ENCODE measurements at regions of chr11 and their contacts with region 1.

Region 1: DNA sequence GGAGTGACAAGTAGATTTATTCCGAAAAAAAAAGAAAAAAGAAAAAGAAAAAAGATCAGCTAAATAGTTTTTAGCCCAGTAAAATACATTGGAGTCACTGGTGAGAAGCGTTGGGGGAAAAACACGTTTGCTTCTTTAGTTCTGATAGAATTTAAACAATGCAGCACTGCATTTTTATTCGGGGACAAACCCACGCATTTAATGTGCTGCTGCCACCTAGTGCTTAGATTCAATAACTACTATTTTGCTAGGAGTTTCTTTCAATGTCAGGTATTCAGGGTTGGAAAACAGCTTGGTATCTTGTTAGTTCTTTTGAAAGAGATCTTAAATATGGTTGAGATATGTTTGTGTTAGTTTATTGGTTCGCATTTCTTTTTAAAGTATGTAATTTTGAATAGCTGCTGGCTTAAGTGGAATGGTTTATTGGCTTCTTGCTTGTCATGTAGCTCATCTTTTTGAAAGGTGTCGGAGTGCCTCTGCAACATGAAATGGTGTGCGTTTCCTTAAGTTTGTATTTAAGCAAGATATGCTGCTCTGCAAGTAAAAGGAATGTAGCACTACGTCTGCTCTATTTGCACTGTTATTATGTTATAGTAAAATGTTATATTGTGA is 41.9 kb downstream of the SVIP start:
- DNase-seq: peak; percentile 51
- ATAC-seq: peak; percentile 53
- H3K4me3 Mint-ChIP-seq: no peak overlapping the region
- H3K27ac Mint-ChIP-seq: no peak overlapping the region
- H3K4me1 Mint-ChIP-seq: no peaks in the 10 kb centered on the region
- H3K27me3 Mint-ChIP-seq: no peaks in the 10 kb centered on the region

Region 2: GRCh38 chr11:21944577-21944976 is 843.1 kb before region 1 on chr11:
- CTCF ChIA-PET with region 1: no interaction called
- POLR2A ChIA-PET with region 1: no interaction called
- intact Hi-C with region 1: no loop called
- DNase-seq: no peak
- ATAC-seq: no peak
- H3K4me3 Mint-ChIP-seq: no peak overlapping the region
- H3K27ac Mint-ChIP-seq: no peak overlapping the region
- H3K4me1 Mint-ChIP-seq: no peaks in the 10 kb centered on the region
- H3K27me3 Mint-ChIP-seq: no peaks in the 10 kb centered on the region

Region 3: DNA sequence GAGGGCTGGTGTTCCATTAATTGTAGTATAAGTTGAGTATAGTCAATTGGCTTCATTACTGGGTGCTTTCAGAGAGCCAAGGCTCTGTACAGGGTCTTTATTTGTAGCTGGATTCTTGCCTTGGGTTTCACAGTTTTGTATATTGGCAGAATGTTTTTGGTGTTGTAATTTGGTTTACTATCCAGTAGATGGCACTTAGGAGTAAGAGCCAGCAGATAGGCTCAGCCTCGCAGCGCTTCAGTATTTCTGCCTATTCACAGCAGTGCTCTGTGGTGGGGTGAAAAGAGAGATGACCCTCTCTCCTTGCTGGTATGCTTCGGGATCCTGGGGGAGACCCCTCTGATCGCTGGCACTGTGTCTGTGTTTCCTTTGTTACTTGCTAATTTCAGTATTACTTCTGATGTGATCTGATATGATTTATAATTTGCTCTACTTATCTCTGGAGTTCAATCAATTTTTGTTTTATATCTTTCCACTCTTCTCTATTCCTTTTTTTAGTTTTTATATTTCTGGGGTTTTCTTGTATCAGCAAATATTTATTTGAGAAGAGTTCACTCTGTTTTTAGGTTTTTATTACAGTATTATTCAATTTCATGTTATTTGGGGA is 542.6 kb before region 1 on chr11:
- CTCF ChIA-PET with region 1: interaction called, 6 read pairs
- POLR2A ChIA-PET with region 1: no interaction called
- intact Hi-C with region 1: loop called (anchors 2 kb)
- DNase-seq: peak; percentile 37
- ATAC-seq: peak; percentile 60
- H3K4me3 Mint-ChIP-seq: no peak overlapping the region
- H3K27ac Mint-ChIP-seq: no peak overlapping the region
- H3K4me1 Mint-ChIP-seq: no peaks in the 10 kb centered on the region
- H3K27me3 Mint-ChIP-seq: peaks cover 14% of the 10 kb centered on the region

Region 4: GRCh38 chr11:22276535-22276934 is 511.1 kb before region 1 on chr11:
- CTCF ChIA-PET with region 1: no interaction called
- POLR2A ChIA-PET with region 1: no interaction called
- intact Hi-C with region 1: no loop called
- DNase-seq: no peak
- ATAC-seq: no peak
- H3K4me3 Mint-ChIP-seq: no peak overlapping the region
- H3K27ac Mint-ChIP-seq: no peak overlapping the region
- H3K4me1 Mint-ChIP-seq: no peaks in the 10 kb centered on the region
- H3K27me3 Mint-ChIP-seq: no peaks in the 10 kb centered on the region

Region 5: DNA sequence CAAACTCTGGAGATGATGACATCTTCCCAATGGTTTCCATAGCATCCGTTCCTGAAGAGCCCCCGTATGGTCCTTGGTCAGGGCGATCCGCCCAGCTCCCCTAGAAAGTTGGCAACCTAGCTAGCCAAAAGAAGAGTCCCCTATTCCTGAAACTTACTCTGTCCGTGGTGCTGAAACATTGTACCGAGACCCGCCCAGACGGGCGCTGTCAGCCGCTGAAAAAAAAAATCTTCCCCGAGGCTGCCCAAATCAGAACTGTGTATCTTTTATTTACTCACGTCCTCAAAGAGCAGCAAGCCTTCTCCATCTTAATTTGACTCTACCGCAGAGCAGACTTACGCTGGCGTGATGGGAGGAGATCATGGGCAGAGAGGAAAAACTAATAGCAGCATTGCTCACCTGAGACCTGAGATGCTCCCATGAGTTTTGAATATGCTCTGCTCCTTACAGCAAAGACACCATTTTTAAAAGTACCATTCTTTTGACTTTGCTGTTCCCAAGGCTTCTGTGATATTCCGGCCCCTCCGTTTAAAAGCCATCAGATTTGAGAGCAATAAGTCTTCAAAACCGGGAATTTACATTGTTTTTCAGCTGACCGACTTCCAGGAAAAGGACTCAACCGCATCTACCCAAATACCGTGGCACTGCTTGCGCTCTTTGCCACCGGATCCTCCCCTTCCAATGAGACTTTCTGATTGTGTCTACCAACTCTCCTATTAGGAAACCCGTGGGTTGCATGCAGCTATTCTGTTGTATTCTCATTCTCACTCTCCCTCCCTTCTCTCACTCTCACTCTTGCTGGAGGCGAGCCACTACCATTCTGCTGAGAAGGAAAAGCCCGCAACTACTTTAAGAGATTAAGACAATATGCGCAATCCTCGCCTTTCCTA is 449.8 kb before region 1 on chr11 and contains the start of gene SLC17A6:
- CTCF ChIA-PET with region 1: interaction called, 7 read pairs
- POLR2A ChIA-PET with region 1: no interaction called
- intact Hi-C with region 1: loop called (anchors 1 kb)
- DNase-seq: peak; percentile 40
- ATAC-seq: peak; percentile 42
- H3K4me3 Mint-ChIP-seq: no peak within 1 kb of the TSS
- H3K27ac Mint-ChIP-seq: no peak within 1 kb of the TSS
- H3K4me1 Mint-ChIP-seq: peaks cover 14% of the 10 kb centered on the region
- H3K27me3 Mint-ChIP-seq: peaks cover 59% of the 10 kb centered on the region
- total RNA-seq, gene SLC17A6: not detected

Region 6: GRCh38 chr11:22666688-22667439 is 120.8 kb before region 1 on chr11:
- CTCF ChIA-PET with region 1: interaction called, 10 read pairs
- POLR2A ChIA-PET with region 1: no interaction called
- intact Hi-C with region 1: loop called (anchors 1 to 5 kb)
- DNase-seq: peak; percentile 52
- ATAC-seq: peak; percentile 79
- H3K4me3 Mint-ChIP-seq: peak overlapping the region; percentile 66
- H3K27ac Mint-ChIP-seq: peak overlapping the region; percentile 29
- H3K4me1 Mint-ChIP-seq: peaks cover 21% of the 10 kb centered on the region
- H3K27me3 Mint-ChIP-seq: peaks cover 42% of the 10 kb centered on the region

Region 7: DNA sequence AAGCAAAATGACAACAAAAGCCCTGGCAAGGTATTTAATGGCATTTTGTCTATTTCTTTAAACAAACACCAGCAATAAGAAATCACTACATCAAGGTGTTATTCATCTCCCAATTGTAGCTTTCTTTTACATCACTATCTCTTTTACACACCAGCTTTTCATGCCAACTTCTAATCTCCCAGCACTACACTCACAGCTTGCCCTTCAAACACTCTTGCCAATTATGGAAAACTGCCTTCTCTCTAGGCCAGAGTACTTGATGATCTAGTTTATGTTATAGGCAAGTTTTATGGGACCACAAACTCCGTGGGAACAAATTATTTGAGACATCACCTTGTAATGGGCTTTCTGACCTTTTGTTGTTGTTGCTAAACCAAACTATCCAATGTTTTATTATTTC is 19.4 kb before region 1 on chr11:
- CTCF ChIA-PET with region 1: interaction called, 15 read pairs
- POLR2A ChIA-PET with region 1: no interaction called
- intact Hi-C with region 1: no loop called
- DNase-seq: no peak
- ATAC-seq: no peak
- H3K4me3 Mint-ChIP-seq: no peak overlapping the region
- H3K27ac Mint-ChIP-seq: no peak overlapping the region
- H3K4me1 Mint-ChIP-seq: no peaks in the 10 kb centered on the region
- H3K27me3 Mint-ChIP-seq: no peaks in the 10 kb centered on the region

Region 8: GRCh38 chr11:22851477-22851876 is 63.8 kb after region 1 on chr11:
- CTCF ChIA-PET with region 1: no interaction called
- POLR2A ChIA-PET with region 1: no interaction called
- intact Hi-C with region 1: no loop called
- DNase-seq: no peak
- ATAC-seq: no peak
- H3K4me3 Mint-ChIP-seq: no peak overlapping the region
- H3K27ac Mint-ChIP-seq: no peak overlapping the region
- H3K4me1 Mint-ChIP-seq: no peaks in the 10 kb centered on the region
- H3K27me3 Mint-ChIP-seq: no peaks in the 10 kb centered on the region

Measured in activated CD4-positive, alpha-beta T cell treated with anti-CD3 and anti-CD28 coated beads for 36 hours (primary cell).